Activated CD4-positive, alpha-beta memory T cell treated with anti-CD3 and anti-CD28 coated beads for 36 hours (primary cell): ENCODE measurements at regions of chr7 and their contacts with region 1.

Region 1: DNA sequence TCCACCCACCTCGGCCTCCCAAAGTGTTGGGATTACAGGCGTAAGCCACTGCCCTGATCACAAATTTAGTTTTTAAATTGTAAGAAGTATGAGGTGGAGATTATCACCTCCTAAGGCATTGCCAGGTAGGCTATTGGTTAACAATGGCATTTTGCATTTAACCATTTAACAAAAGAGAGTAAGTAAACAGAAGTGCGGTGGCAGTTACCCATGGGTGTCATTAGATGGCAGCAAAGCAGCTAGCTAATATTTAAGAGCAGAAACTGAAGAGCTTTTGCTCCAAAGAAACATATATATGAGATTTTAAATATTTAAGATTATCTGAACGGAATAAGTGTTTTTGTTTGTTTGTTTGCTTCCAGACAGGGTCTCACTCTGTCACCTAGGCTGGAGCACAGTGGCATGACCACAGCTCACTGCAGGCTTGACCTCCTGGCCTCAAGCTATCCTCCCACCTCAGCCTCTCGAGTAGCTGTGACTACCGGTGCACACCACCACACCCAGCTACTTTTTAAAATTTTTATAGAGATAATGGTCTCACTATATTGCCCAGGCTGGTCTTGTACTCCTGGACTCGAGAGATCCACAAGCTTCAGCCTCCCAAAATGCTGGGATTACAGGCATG is 325.5 kb upstream of the C7orf33 start:
- DNase-seq: no peak
- H3K4me3 Mint-ChIP-seq: no peak overlapping the region
- H3K27ac Mint-ChIP-seq: no peak overlapping the region
- H3K4me1 Mint-ChIP-seq: peaks cover 8% of the 10 kb centered on the region
- H3K27me3 Mint-ChIP-seq: peaks cover 9% of the 10 kb centered on the region

Region 2: DNA sequence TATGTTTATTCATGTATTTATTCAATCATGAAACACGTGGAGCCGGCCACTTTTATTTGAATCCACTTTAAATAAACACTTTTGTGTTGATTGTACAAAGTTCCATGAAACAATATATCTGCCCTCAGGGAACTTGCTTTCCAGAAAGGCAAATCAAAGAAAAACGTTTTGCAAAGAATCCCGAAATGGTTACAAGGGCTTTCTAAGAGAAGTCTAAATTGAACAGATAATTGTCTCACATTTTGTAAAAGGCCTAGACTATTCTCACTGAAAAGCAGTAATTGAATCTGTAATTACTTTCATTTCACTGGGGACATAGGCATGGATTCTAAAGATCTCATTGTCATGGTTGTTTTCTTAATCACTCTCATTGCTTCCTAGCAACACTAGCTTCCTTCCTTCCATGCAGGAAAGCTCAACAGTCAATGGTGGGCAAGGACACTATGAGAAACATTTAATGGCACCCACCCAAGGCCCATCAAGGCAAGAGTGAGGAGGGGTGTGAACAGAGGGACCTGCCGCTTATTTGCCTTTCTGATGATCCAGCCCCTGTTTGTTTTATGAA is 296.9 kb before region 1 on chr7:
- CTCF ChIA-PET with region 1: no interaction called
- POLR2A ChIA-PET with region 1: no interaction called
- intact Hi-C with region 1: no loop called
- DNase-seq: no peak
- H3K4me3 Mint-ChIP-seq: no peak overlapping the region
- H3K27ac Mint-ChIP-seq: no peak overlapping the region
- H3K4me1 Mint-ChIP-seq: no peaks in the 10 kb centered on the region
- H3K27me3 Mint-ChIP-seq: no peaks in the 10 kb centered on the region

Region 3: DNA sequence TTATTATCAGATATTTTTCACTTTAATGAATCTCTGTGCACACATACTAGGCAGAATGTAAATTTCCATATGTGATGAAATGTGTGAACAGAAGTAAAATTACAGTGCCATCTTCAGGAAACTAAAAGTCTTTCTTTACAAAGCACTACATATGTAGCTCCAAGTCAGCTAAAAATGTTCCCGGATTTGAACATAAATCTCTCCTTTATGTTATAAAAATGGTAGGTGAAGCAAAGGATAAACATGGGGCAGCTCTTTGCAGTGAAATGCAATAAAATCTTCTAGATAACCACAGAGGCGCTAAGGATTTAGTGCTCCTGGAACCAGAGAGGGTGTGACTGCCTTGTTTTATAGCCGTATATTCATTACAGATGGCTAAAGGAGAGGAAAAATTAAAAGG is 220.6 kb after region 1 on chr7:
- CTCF ChIA-PET with region 1: interaction called, 3 read pairs
- POLR2A ChIA-PET with region 1: no interaction called
- intact Hi-C with region 1: loop called (anchors 5 kb)
- DNase-seq: no peak
- H3K4me3 Mint-ChIP-seq: no peak overlapping the region
- H3K27ac Mint-ChIP-seq: no peak overlapping the region
- H3K4me1 Mint-ChIP-seq: peaks cover 9% of the 10 kb centered on the region
- H3K27me3 Mint-ChIP-seq: peaks cover 2% of the 10 kb centered on the region

Region 4: DNA sequence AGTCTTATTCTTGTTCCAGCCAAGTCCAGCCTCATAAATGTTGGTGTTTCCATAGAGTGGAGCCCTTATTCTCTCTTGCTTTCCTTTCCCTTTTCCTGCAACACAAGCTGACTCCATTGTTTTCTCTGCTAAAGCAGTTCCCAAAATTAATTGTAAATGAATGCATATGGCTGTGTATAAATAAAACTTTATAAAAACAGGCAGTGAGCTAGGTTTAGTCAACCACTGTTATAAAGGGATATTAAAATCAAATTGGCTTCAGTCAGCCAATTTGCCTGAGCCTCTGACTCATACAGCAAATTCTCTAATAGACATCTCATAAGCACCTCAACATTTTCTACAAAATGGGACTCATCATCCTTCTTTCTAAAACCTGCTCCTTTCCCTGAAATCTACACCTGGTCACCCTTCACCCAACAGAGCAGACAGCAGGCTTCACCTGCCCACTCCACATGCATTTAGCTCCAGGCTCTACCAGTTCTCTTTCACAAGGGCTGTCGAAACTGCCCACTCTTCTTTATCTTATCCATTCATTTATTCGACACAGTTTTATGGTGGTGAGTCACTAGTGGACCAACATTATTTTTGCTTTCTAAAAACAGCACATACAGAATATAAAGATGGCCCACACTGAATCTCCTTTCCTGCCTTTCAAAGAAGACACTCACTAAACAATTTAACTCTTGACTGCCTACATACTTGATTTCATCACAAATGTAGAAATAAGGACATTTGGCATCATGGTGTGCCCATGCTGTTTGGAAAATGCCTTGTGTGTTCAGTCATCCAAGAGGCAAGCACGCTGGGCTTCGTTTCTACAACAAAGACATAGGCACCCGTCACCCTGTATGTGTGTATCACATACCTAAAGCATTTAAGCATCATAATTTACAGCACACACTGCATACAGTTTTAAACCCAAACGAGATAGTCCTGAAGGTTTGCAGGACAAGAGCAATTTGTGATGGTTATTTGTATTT is 251.0 kb after region 1 on chr7:
- CTCF ChIA-PET with region 1: no interaction called
- POLR2A ChIA-PET with region 1: no interaction called
- intact Hi-C with region 1: no loop called
- DNase-seq: no peak
- H3K4me3 Mint-ChIP-seq: no peak overlapping the region
- H3K27ac Mint-ChIP-seq: no peak overlapping the region
- H3K4me1 Mint-ChIP-seq: peaks cover 5% of the 10 kb centered on the region
- H3K27me3 Mint-ChIP-seq: peaks cover 21% of the 10 kb centered on the region

Region 5: DNA sequence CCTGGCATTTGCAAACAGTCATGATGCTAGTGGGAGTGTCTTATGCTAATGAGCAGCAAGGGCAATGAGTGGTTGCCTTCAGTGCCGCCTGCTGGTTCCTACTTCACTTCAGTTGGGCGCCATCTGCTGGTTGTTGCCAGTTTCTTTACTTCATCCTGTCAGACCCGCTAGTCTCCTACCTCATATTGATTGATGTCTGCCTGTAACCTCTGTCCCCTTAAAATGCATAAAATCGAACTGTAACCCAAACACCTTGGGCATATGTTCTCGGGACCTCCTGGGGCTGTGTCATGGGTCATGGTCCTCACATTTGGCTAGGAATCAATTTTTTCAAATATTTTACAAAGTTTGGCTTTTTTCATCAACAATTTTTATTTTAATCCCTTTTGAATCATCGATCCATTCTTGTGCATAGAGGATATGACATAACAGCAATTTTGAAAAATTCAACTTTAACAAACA is 262.7 kb after region 1 on chr7:
- CTCF ChIA-PET with region 1: interaction called, 6 read pairs
- POLR2A ChIA-PET with region 1: no interaction called
- intact Hi-C with region 1: loop called (anchors 1 kb)
- DNase-seq: peak; percentile 93
- H3K4me3 Mint-ChIP-seq: no peak overlapping the region
- H3K27ac Mint-ChIP-seq: no peak overlapping the region
- H3K4me1 Mint-ChIP-seq: peaks cover 6% of the 10 kb centered on the region
- H3K27me3 Mint-ChIP-seq: peaks cover 44% of the 10 kb centered on the region